ENCODE measurements at regions of chr19 and their contacts with region 1.

Region 1: DNA sequence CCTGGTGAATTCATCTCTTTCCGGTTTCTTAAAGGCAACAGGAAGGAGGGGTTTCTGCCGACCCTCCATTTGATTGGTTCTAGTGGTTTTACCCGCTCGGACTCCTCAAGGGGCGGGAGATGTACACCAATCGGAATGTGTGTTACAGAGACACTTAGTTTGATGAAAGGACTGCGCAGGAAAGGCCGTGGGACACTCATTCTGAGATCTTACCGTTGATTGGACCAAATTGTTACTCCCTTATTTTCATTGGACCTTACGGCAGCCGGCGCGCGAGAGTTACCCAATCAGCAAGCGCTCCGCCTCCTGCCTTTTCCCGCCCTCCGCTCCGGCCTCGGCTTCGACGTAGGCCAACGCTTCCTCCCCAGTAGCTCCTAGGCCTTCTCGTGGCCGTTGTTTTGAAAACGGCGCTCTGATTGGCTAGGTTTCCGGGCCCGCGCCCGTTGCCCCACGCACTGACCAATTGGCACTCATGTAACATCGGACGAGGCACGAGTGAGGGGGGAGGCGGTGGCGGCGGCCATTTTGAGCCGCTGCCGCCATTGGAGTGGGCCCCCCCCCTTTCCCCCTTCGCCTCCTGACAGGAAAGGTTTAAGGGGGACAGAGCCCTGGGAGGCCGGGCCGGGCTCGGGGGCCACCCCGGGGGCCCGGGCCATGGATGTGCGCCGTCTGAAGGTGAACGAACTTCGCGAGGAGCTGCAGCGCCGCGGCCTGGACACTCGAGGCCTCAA is at the start of gene HNRNPUL1:
- DNase-seq: peak; percentile 99 to 100 (median 100)
- ATAC-seq: peak; percentile 50
- H3K4me3 ChIP-seq: peak within 1 kb of the TSS; percentile 85
- H3K4me3 Mint-ChIP-seq: peak within 1 kb of the TSS; percentile 96
- H3K27ac ChIP-seq: peak within 1 kb of the TSS; percentile 99 to 100
- H3K27ac Mint-ChIP-seq: peak within 1 kb of the TSS; percentile 100
- H3K4me1 ChIP-seq: peaks cover 59% of the 10 kb centered on the region
- H3K4me1 Mint-ChIP-seq: peaks cover 55% of the 10 kb centered on the region
- H3K27me3 ChIP-seq: no peaks in the 10 kb centered on the region
- H3K27me3 Mint-ChIP-seq: peaks cover 5% of the 10 kb centered on the region
- CTCF ChIP-seq: no peak
- total RNA-seq, gene HNRNPUL1: 367 to 388 TPM

Region 2: GRCh38 chr19:40200341-40201099 is 1063.5 kb before region 1 on chr19:
- CTCF ChIA-PET with region 1: no interaction called
- POLR2A ChIA-PET with region 1: no interaction called
- intact Hi-C with region 1: no loop called
- DNase-seq: no peak
- ATAC-seq: no peak
- H3K4me3 ChIP-seq: no peak overlapping the region
- H3K4me3 Mint-ChIP-seq: no peak overlapping the region
- H3K27ac ChIP-seq: no peak overlapping the region
- H3K27ac Mint-ChIP-seq: no peak overlapping the region
- H3K4me1 ChIP-seq: no peaks in the 10 kb centered on the region
- H3K4me1 Mint-ChIP-seq: peaks cover 6% of the 10 kb centered on the region
- H3K27me3 ChIP-seq: no peaks in the 10 kb centered on the region
- H3K27me3 Mint-ChIP-seq: no peaks in the 10 kb centered on the region
- CTCF ChIP-seq: no peak

Region 3: DNA sequence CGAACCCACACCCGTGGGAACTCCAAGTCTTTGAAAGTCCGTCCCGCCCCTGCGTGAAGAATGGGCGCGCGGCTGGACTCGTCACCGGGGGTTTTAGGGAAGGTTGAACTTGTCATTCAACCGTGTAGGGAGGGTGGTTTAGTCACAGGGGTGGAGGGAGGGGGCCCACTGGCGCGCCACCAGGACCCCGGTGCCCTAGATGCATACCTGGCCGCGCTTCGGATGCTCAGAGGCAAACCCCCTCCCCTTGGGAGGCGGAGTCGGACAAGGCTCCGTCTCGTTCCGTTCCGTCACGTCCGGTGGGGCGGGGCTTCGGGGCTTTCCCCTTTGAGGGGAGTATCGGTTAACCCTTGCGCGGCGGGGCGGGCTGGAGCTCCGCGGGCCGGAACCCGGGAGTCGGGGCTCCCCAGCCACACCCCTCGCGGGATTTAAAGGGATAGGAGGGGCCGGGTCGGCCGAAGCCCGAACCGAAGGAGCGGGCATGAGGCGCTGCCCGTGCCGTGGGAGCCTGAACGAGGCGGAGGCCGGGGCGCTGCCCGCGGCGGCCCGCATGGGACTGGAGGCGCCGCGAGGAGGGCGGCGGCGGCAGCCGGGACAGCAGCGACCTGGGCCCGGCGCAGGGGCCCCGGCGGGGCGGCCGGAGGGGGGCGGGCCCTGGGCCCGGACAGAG is 547.2 kb before region 1 on chr19 and contains the starts of genes COQ8B and ITPKC:
- CTCF ChIA-PET with region 1: no interaction called
- POLR2A ChIA-PET with region 1: interaction called, 3 read pairs
- intact Hi-C with region 1: loop called in 1 of 2 experiments (anchors 5 kb)
- DNase-seq: peak; percentile 98 to 100 (median 99)
- ATAC-seq: peak; percentile 73
- H3K4me3 ChIP-seq: peak within 1 kb of the TSS; percentile 89
- H3K4me3 Mint-ChIP-seq: peak within 1 kb of the TSS; percentile 95
- H3K27ac ChIP-seq: peak within 1 kb of the TSS; percentile 89 to 96
- H3K27ac Mint-ChIP-seq: peak within 1 kb of the TSS; percentile 94
- H3K4me1 ChIP-seq: peaks cover 70% of the 10 kb centered on the region
- H3K4me1 Mint-ChIP-seq: peaks cover 70% of the 10 kb centered on the region
- H3K27me3 ChIP-seq: no peaks in the 10 kb centered on the region
- H3K27me3 Mint-ChIP-seq: no peaks in the 10 kb centered on the region
- CTCF ChIP-seq: no peak
- total RNA-seq, gene COQ8B: 16.4 to 18.3 TPM
- total RNA-seq, gene ITPKC: 3.7 to 4.5 TPM

Region 4: GRCh38 chr19:40827386-40828247 is 436.4 kb before region 1 on chr19:
- CTCF ChIA-PET with region 1: no interaction called
- POLR2A ChIA-PET with region 1: interaction called, 3 read pairs
- intact Hi-C with region 1: loop called in 1 of 2 experiments (anchors 2 kb)
- DNase-seq: peak in 1 of 14 experiments; percentile 9
- ATAC-seq: no peak
- H3K4me3 ChIP-seq: no peak overlapping the region
- H3K4me3 Mint-ChIP-seq: peak overlapping the region; percentile 32
- H3K27ac ChIP-seq: peak overlapping the region in 1 of 2 donors; percentile 49
- H3K27ac Mint-ChIP-seq: peak overlapping the region; percentile 85
- H3K4me1 ChIP-seq: peaks cover 26% of the 10 kb centered on the region
- H3K4me1 Mint-ChIP-seq: peaks cover 30% of the 10 kb centered on the region
- H3K27me3 ChIP-seq: no peaks in the 10 kb centered on the region
- H3K27me3 Mint-ChIP-seq: no peaks in the 10 kb centered on the region
- CTCF ChIP-seq: no peak

Region 5: DNA sequence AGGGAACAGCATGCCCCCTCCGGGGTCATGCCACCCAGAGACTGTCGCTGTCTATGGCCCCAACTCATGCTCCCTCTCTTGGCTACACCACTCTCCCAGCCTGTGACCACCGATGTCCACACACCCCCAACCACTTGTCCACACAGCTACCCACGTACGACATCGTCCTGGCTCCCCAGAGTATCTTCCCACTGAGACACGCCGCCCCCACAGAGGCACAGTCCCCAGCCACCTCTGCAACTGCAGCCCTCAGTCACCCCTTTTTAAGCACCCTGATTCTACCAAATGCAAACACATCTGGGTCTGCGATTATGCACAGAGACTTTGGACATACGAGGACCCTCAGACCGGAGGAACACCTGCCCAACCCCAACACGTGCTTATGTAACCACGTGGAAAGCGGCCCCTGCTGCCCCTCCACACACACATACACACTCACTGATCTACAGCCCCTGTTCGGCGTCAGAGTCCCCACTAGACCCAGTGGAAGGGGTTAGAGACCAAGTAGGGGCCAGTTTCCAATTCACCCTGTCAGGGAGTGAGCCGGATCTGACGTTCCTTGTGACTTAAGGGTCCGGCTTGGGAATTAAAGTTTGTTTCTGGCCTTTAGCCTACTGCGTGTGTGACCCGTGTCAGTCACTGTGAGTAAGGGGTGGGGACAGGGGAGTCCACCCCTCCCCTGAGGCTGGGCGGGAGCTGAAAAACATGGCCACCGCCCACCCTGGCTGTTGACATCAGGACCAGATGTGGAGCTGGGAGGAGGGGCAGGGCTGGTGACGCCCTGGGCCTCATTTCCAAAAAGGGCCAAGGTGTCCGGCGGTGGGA is 56.9 kb before region 1 on chr19:
- CTCF ChIA-PET with region 1: interaction called, 64 read pairs
- POLR2A ChIA-PET with region 1: interaction called, 97 read pairs
- intact Hi-C with region 1: loop called (anchors 1 kb)
- DNase-seq: no peak
- ATAC-seq: no peak
- H3K4me3 ChIP-seq: no peak overlapping the region
- H3K4me3 Mint-ChIP-seq: no peak overlapping the region
- H3K27ac ChIP-seq: no peak overlapping the region
- H3K27ac Mint-ChIP-seq: peak overlapping the region; percentile 39
- H3K4me1 ChIP-seq: peaks cover 9% of the 10 kb centered on the region
- H3K4me1 Mint-ChIP-seq: no peaks in the 10 kb centered on the region
- H3K27me3 ChIP-seq: no peaks in the 10 kb centered on the region
- H3K27me3 Mint-ChIP-seq: no peaks in the 10 kb centered on the region
- CTCF ChIP-seq: no peak

Region 6: GRCh38 chr19:41327576-41328156 is 63.7 kb after region 1 on chr19:
- CTCF ChIA-PET with region 1: interaction called, 12 read pairs
- POLR2A ChIA-PET with region 1: interaction called, 22 read pairs
- intact Hi-C with region 1: loop called in 1 of 2 experiments (anchors 1 kb)
- DNase-seq: peak; percentile 47 to 97 (median 76)
- ATAC-seq: peak; percentile 65
- H3K4me3 ChIP-seq: peak overlapping the region; percentile 44
- H3K4me3 Mint-ChIP-seq: peak overlapping the region; percentile 82
- H3K27ac ChIP-seq: peak overlapping the region; percentile 74 to 89
- H3K27ac Mint-ChIP-seq: peak overlapping the region; percentile 97
- H3K4me1 ChIP-seq: peaks cover 99% of the 10 kb centered on the region
- H3K4me1 Mint-ChIP-seq: peaks cover 75% of the 10 kb centered on the region
- H3K27me3 ChIP-seq: no peaks in the 10 kb centered on the region
- H3K27me3 Mint-ChIP-seq: no peaks in the 10 kb centered on the region
- CTCF ChIP-seq: no peak

Region 7: DNA sequence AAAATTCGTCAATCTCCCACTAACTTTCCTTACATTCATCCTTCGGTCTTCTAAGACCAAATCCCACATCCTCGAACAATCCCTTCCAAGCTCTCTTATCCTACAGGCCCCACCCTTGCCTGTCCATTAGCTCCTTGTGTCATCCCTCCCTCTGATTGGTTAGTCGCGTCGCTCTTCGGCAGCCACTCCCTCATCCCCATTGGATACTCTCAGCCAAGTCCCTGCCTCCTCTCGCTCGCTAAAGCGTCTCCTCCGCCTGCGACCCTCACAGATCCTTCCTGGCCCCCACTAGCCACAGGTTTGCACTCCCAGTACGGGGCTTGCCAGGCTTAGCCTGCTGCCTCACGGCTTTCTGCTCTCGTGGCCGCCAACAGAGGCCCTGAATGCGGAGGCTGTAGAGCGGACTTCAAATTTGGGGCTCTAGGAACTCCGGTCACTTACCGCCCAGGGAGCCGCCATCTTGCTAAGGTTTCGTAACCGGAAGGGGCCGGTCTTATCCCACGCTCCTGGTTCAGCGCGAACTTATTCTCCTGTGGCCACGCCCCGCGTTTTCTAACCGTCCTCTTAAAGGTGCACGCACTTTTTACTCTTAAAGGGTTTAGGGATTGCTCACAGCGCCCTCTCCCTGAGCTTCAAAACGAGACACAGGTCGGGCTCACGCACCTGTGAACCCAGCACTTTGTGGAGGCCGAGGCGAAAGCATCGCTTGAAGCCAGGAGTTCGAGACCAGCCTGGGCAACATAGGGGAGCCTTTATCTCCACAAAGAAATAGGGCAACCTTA is 175.6 kb after region 1 on chr19 and contains the start of gene DMAC2:
- CTCF ChIA-PET with region 1: no interaction called
- POLR2A ChIA-PET with region 1: interaction called, 16 read pairs
- intact Hi-C with region 1: loop called in 1 of 2 experiments (anchors 1 kb)
- DNase-seq: peak; percentile 86 to 97 (median 93)
- ATAC-seq: peak; percentile 99
- H3K4me3 ChIP-seq: peak within 1 kb of the TSS; percentile 90
- H3K4me3 Mint-ChIP-seq: no peak within 1 kb of the TSS
- H3K27ac ChIP-seq: peak within 1 kb of the TSS; percentile 60 to 77
- H3K27ac Mint-ChIP-seq: no peak within 1 kb of the TSS
- H3K4me1 ChIP-seq: peaks cover 16% of the 10 kb centered on the region
- H3K4me1 Mint-ChIP-seq: no peaks in the 10 kb centered on the region
- H3K27me3 ChIP-seq: no peaks in the 10 kb centered on the region
- H3K27me3 Mint-ChIP-seq: peaks cover 13% of the 10 kb centered on the region
- CTCF ChIP-seq: peak; percentile 65
- total RNA-seq, gene DMAC2: 21.6 to 25.7 TPM